ENCODE measurements at regions of chr16 and their contacts with region 1.

Region 1: DNA sequence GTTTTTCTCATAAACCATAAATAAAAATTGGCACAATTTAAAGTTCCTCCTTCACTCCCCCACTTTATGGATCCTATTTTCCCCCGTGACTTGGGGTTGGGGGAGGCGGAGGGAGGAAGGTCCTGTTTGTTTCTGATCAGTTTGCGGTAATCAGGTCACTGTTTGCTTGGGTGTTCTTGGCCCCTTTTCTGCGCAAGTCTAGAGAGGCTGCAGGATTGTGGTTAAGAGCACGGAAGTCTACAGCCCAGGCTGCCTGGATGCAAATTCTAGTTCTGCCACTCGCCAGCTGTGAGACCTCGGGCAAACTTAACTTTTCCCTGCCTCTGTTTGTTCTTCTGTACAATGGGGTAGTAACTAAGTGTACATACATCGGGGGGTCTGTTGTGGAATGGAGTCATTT is 12.1 kb downstream of the ATP2C2 start:
- DNase-seq: no peak
- H3K4me3 ChIP-seq: no peak overlapping the region
- H3K4me3 Mint-ChIP-seq: no peak overlapping the region
- H3K27ac Mint-ChIP-seq: no peak overlapping the region
- H3K4me1 ChIP-seq: peaks cover 12% of the 10 kb centered on the region; the same call in 1 of the 2 replicates
- H3K4me1 Mint-ChIP-seq: peaks cover 12% of the 10 kb centered on the region
- H3K27me3 ChIP-seq: no peaks in the 10 kb centered on the region
- H3K27me3 Mint-ChIP-seq: no peaks in the 10 kb centered on the region
- CTCF ChIP-seq: no peak

Region 2: GRCh38 chr16:84239141-84239769 is 141.2 kb before region 1 on chr16:
- CTCF ChIA-PET with region 1: no interaction called
- POLR2A ChIA-PET with region 1: no interaction called
- intact Hi-C with region 1: no loop called
- DNase-seq: no peak
- H3K4me3 ChIP-seq: no peak overlapping the region
- H3K4me3 Mint-ChIP-seq: no peak overlapping the region
- H3K27ac Mint-ChIP-seq: no peak overlapping the region
- H3K4me1 ChIP-seq: no peaks in the 10 kb centered on the region
- H3K4me1 Mint-ChIP-seq: no peaks in the 10 kb centered on the region
- H3K27me3 ChIP-seq: peaks cover 2% of the 10 kb centered on the region
- H3K27me3 Mint-ChIP-seq: peaks cover 37% of the 10 kb centered on the region
- CTCF ChIP-seq: no peak

Region 3: GRCh38 chr16:84414789-84415326 is 34.5 kb after region 1 on chr16:
- CTCF ChIA-PET with region 1: no interaction called
- POLR2A ChIA-PET with region 1: no interaction called
- intact Hi-C with region 1: no loop called
- DNase-seq: no peak
- H3K4me3 ChIP-seq: no peak overlapping the region
- H3K4me3 Mint-ChIP-seq: no peak overlapping the region
- H3K27ac Mint-ChIP-seq: no peak overlapping the region
- H3K4me1 ChIP-seq: peaks cover 7% of the 10 kb centered on the region
- H3K4me1 Mint-ChIP-seq: peaks cover 16% of the 10 kb centered on the region
- H3K27me3 ChIP-seq: no peaks in the 10 kb centered on the region
- H3K27me3 Mint-ChIP-seq: no peaks in the 10 kb centered on the region
- CTCF ChIP-seq: no peak

Region 4: GRCh38 chr16:84449171-84450140 is 69.1 kb after region 1 on chr16:
- CTCF ChIA-PET with region 1: no interaction called
- POLR2A ChIA-PET with region 1: no interaction called
- intact Hi-C with region 1: loop called (anchors 10 kb)
- DNase-seq: peak in 1 of 2 experiments; percentile 26
- H3K4me3 ChIP-seq: no peak overlapping the region
- H3K4me3 Mint-ChIP-seq: no peak overlapping the region
- H3K27ac Mint-ChIP-seq: no peak overlapping the region
- H3K4me1 ChIP-seq: no peaks in the 10 kb centered on the region
- H3K4me1 Mint-ChIP-seq: no peaks in the 10 kb centered on the region
- H3K27me3 ChIP-seq: no peaks in the 10 kb centered on the region
- H3K27me3 Mint-ChIP-seq: no peaks in the 10 kb centered on the region
- CTCF ChIP-seq: no peak

Measured in Caco-2 (cell line).